PC-9 (cell line): ENCODE measurements at regions of chr20 and their contacts with region 1.

Region 1: GRCh38 chr20:54062812-54063280 is 7.5 kb downstream of the BCAS1 start:
- DNase-seq: peak in 1 of 2 experiments; percentile 60
- H3K4me3 ChIP-seq: no peak overlapping the region
- H3K27ac ChIP-seq: no peak overlapping the region
- H3K4me1 ChIP-seq: peaks cover 13% of the 10 kb centered on the region
- H3K27me3 ChIP-seq: no peaks in the 10 kb centered on the region
- CTCF ChIP-seq: peak; percentile 79

Region 2: DNA sequence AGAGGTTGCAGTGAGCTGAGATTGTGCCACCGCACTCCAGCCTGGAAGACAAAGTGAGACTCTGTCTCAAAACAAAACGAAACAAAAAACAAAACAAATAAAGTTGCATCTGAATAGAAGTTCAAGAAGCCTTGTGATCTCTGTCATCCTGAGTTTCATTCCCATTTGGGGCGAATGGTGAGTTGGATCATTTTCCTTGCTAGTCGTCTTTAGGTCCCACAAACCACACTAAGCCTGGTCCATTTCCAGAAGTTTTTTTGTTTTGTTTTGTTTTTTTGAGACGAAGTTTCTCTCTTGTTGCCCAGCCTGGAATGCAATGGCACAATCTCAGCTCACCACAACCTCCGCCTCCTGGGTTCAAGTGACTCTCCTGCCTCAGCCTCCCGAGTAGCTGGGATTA is 503.0 kb before region 1 on chr20:
- CTCF ChIA-PET with region 1: no interaction called
- POLR2A ChIA-PET with region 1: interaction called, 11 read pairs
- intact Hi-C with region 1: no loop called
- DNase-seq: no peak
- H3K4me3 ChIP-seq: no peak overlapping the region
- H3K27ac ChIP-seq: no peak overlapping the region
- H3K4me1 ChIP-seq: no peaks in the 10 kb centered on the region
- H3K27me3 ChIP-seq: no peaks in the 10 kb centered on the region
- CTCF ChIP-seq: no peak

Region 3: GRCh38 chr20:53939572-53940359 is 123.1 kb before region 1 on chr20:
- CTCF ChIA-PET with region 1: no interaction called
- POLR2A ChIA-PET with region 1: no interaction called
- intact Hi-C with region 1: loop called (anchors 1 kb)
- DNase-seq: peak; percentile 89 to 90
- H3K4me3 ChIP-seq: no peak overlapping the region
- H3K27ac ChIP-seq: peak overlapping the region; percentile 65
- H3K4me1 ChIP-seq: peaks cover 26% of the 10 kb centered on the region
- H3K27me3 ChIP-seq: no peaks in the 10 kb centered on the region
- CTCF ChIP-seq: peak; percentile 96

Region 4: GRCh38 chr20:54083459-54083858 is 20.6 kb after region 1 on chr20:
- CTCF ChIA-PET with region 1: no interaction called
- POLR2A ChIA-PET with region 1: no interaction called
- intact Hi-C with region 1: no loop called
- DNase-seq: no peak
- H3K4me3 ChIP-seq: no peak overlapping the region
- H3K27ac ChIP-seq: no peak overlapping the region
- H3K4me1 ChIP-seq: no peaks in the 10 kb centered on the region
- H3K27me3 ChIP-seq: no peaks in the 10 kb centered on the region
- CTCF ChIP-seq: no peak

Region 5: DNA sequence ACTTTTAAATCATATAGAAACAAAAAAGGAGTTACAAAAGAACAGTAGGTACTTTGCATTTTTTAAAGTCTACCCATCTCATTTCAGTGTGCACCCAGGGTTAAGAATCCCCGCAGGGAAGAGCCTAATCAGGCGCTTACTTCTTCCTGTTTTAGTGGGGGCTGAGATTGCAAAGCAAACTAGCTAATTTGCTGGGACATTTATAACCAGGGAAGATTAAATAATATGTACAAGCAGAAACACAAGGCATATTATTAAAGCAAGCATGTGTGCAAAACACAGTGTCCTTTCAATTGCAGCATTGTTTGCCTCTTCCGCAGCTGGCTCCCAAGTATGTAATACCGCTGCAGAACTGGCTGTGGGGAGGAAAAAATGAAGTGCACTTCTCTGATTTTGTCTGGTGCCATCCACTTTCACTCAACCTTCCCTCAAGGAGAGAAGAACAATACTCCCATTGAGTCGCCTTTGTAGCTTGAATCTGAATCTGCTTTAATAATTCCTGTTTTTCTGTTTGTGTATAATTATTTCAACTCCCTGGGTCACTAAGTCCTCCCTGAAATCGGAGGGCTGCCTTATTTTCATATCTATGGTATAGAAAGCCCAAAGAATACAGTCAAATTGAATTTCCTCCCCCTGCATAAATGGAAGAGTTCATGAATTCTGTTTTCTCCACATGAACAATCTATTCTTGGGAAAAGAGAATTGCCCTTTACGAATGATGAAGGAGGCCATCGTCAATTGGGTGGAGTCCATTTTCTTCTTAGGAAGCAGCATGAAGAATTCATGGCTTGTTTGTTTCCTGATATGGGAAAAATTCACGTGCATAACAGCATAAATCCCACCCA is 30.8 kb after region 1 on chr20:
- CTCF ChIA-PET with region 1: interaction called, 3 read pairs
- POLR2A ChIA-PET with region 1: no interaction called
- intact Hi-C with region 1: loop called (anchors 1 kb)
- DNase-seq: no peak
- H3K4me3 ChIP-seq: no peak overlapping the region
- H3K27ac ChIP-seq: no peak overlapping the region
- H3K4me1 ChIP-seq: peaks cover 8% of the 10 kb centered on the region; the same call in 1 of the 2 replicates
- H3K27me3 ChIP-seq: no peaks in the 10 kb centered on the region
- CTCF ChIP-seq: no peak

Region 6: DNA sequence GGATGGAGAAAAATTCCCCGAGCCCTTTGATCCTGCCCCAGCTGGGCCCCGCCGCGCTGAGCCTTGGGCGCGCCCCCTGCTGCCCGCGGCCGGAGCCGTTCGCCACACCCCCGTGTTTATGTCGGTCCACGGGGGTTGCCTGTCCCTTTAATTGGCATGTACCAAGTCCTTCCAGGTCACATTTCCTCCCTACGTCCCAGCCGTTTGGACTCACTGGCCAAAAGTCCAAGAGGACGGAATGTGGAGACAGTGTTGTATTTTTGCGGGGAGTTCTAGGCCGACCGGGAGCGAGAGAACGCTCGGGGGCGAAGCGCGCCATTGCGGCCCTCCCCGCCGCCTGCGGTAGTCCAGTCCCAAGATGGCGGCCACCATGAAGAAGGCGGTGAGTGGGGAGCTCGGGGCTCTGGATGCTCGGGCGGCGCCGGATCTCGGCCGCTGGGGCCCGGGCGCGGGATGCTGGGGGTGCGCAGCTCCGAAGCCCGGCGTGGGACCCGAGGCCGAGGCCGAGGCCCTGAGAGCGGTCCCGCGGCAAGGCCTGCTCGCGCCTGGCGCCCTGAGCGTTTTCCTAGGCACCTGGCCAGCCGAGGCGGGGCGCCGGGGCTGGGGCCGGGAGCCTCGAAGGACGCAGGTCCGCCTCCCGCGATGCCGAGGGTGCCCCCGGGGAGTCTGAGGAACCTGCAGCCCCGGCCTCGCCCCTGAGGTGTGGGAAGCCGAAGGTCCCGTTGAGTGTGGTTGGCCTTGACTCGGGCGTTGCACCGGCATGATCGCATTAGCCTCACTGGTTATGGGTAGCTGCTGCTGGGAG is 145.1 kb after region 1 on chr20 and contains the start of gene PFDN4:
- CTCF ChIA-PET with region 1: no interaction called
- POLR2A ChIA-PET with region 1: no interaction called
- intact Hi-C with region 1: loop called (anchors 1 kb)
- DNase-seq: peak; percentile 73 to 92
- H3K4me3 ChIP-seq: peak within 1 kb of the TSS; percentile 73
- H3K27ac ChIP-seq: peak within 1 kb of the TSS; percentile 86
- H3K4me1 ChIP-seq: peaks cover 15% of the 10 kb centered on the region
- H3K27me3 ChIP-seq: no peaks in the 10 kb centered on the region
- CTCF ChIP-seq: peak; percentile 92
- total RNA-seq, gene PFDN4: 44.1 and 49.5 TPM in 2 replicates